Activated T-helper 1 cell treated with anti-CD3 and anti-CD28 coated beads, Interleukin-12 subunit alpha, Interleukin-12 subunit beta, Interleukin-2, Interleukin-4 antibody, amounts not matched to agents 30 ng/mL and 10 ng/mL and 1 ng/mL, durations not matched to agents 14 hours and 24 hours and 36 hours (primary cell): ENCODE measurements at regions of chr7 and their contacts with region 1.

Region 1: DNA sequence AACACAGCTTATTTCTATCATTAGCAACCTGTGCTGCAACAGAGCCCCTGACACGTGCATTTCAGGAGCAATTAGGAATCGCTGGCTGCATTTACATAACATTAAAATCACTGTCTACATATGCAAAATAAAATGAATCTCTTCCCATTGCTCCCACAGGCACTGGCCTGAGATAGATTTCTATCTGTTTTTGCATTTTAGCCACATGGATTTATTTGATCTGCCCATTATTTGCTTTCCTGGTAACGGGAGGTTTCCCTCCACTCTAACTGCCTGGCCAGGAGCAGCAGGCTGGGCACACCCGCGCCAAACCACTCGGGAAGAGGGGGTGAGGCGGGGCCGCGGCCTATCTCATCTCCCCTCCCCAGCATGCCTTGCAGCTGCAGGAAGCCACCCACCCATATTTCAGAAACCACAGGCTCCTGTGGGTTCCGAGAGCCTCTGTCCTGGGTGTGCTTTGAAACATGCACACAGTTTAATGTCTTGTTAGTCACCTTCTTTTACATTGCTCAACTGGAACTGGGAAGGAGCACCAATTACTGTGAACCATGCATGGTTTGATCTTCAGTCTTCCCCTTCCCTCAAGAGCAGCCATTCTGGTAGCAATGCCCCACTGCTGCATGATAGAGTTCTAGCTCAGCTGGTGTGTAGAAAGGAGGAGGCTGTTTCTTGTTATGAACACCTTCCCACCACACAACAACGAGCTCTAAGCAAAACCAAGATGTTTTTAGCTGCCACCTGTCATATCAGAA is 37.7 kb upstream of the IKZF1 start:
- DNase-seq: peak; percentile 82
- H3K4me3 Mint-ChIP-seq: peak overlapping the region; percentile 70
- H3K27ac Mint-ChIP-seq: peak overlapping the region; percentile 98
- H3K4me1 Mint-ChIP-seq: peaks cover 89% of the 10 kb centered on the region
- H3K27me3 Mint-ChIP-seq: no peaks in the 10 kb centered on the region

Region 2: GRCh38 chr7:50197549-50197948 is 69.3 kb before region 1 on chr7:
- intact Hi-C with region 1: loop called (anchors 1 kb)
- DNase-seq: no peak
- H3K4me3 Mint-ChIP-seq: peak overlapping the region; percentile 30
- H3K27ac Mint-ChIP-seq: peak overlapping the region; percentile 80
- H3K4me1 Mint-ChIP-seq: peaks cover 39% of the 10 kb centered on the region
- H3K27me3 Mint-ChIP-seq: peaks cover 24% of the 10 kb centered on the region

Region 3: GRCh38 chr7:50281680-50282445 is 15.1 kb after region 1 on chr7:
- intact Hi-C with region 1: loop called (anchors 1 kb)
- DNase-seq: no peak
- H3K4me3 Mint-ChIP-seq: peak overlapping the region; percentile 46
- H3K27ac Mint-ChIP-seq: no peak overlapping the region
- H3K4me1 Mint-ChIP-seq: peaks cover 48% of the 10 kb centered on the region
- H3K27me3 Mint-ChIP-seq: no peaks in the 10 kb centered on the region

Region 4: GRCh38 chr7:50317221-50317678 is 50.4 kb after region 1 on chr7:
- intact Hi-C with region 1: loop called (anchors 1 kb)
- DNase-seq: peak; percentile 53
- H3K4me3 Mint-ChIP-seq: peak overlapping the region; percentile 82
- H3K27ac Mint-ChIP-seq: peak overlapping the region; percentile 93
- H3K4me1 Mint-ChIP-seq: peaks cover 100% of the 10 kb centered on the region
- H3K27me3 Mint-ChIP-seq: no peaks in the 10 kb centered on the region

Region 5: GRCh38 chr7:50369143-50370026 is 102.6 kb after region 1 on chr7:
- intact Hi-C with region 1: loop called (anchors 1 kb)
- DNase-seq: no peak
- H3K4me3 Mint-ChIP-seq: peak overlapping the region; percentile 45
- H3K27ac Mint-ChIP-seq: peak overlapping the region; percentile 85
- H3K4me1 Mint-ChIP-seq: peaks cover 100% of the 10 kb centered on the region
- H3K27me3 Mint-ChIP-seq: no peaks in the 10 kb centered on the region

Region 6: DNA sequence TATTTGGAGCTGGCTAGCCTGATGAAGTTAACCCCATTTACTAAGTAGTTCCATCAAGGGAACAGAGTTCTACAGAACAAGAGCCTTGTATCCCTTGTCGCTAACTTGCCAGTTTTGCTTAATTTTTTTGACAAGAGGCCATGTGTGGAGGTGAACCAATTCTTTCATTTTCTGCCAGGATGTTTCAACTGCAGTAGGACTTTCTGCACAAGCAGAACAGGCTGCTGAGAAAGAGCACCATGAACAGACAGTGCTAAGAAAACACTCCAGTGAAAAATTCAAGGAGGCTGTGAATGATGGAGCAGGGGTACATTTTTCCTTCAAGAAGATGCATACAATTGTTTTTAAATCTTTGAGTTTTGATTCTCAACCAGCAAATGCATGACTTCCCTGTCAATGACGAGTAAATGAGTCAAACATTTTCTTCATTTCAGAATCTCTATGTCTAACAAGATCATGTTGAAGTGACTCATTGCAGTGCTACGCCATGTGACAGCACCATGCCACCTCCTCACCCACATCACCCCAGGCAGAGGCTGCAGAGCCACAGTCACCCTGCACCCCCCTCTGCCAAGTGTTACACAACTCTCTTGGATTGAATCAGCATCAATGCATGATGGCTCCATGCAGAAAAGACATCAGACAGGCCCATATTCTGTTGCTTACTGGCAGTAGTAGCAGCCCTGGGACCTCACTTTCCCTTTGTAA is 856.7 kb after region 1 on chr7:
- intact Hi-C with region 1: loop called (anchors 10 kb)
- DNase-seq: peak; percentile 52
- H3K4me3 Mint-ChIP-seq: no peak overlapping the region
- H3K27ac Mint-ChIP-seq: peak overlapping the region; percentile 84
- H3K4me1 Mint-ChIP-seq: peaks cover 31% of the 10 kb centered on the region
- H3K27me3 Mint-ChIP-seq: no peaks in the 10 kb centered on the region